Adrenal gland (tissue), 19 donors: ENCODE measurements at regions of chr16 and their contacts with region 1.

Region 1: GRCh38 chr16:21638573-21638975 is 13.8 kb downstream of the IGSF6 start:
- DNase-seq: no peak
- H3K4me3 ChIP-seq: no peak overlapping the region
- H3K27ac ChIP-seq: no peak overlapping the region
- H3K4me1 ChIP-seq: peaks cover 14 to 47% of the 10 kb centered on the region in 2 donors
- H3K27me3 ChIP-seq: no peaks in the 10 kb centered on the region
- CTCF ChIP-seq: no peak
- POLR2A ChIP-seq: no peak

Region 2: DNA sequence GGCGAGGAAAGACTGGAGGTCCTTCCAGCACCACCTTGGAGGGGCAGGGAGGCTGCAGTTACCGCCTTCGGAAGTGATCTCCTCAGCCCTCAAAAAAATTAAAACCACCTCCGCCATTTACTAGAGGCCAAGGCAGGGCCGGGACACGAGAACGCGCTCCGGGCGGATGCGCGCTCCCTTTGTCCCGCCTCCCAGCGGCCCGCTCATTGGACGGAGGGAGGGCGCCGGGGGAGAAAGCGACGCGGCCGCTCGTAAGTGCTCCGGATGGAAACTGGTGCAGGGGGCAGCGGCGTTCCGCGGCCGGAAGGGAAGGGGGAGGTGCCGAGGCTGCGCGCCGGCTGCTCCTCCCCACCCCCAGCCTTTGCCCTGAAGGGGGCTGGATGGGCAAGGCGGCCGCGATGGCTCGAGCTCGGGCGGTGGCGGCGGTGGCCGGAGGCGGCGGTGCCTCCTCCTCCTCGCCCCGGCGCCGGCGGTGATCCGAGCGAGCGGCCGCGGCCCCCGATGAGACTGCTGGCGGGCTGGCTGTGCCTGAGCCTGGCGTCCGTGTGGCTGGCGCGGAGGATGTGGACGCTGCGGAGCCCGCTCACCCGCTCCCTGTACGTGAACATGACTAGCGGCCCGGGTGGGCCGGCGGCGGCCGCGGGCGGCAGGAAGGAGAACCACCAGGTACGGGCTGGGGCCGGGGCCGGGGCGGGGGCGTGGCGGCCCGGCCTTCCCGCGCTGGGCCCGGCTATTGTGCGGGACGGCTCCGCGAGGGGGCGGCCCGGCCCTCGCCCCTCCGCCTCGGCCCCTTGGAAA is 39.1 kb before region 1 on chr16 and contains the start of gene METTL9:
- intact Hi-C with region 1: loop called in 1 of 2 experiments (anchors 5 kb)
- DNase-seq: peak; percentile 94 to 97 (median 95)
- H3K4me3 ChIP-seq: peak within 1 kb of the TSS; percentile 62 to 92 (median 83)
- H3K27ac ChIP-seq: peak within 1 kb of the TSS; percentile 71 to 98 (median 96)
- H3K4me1 ChIP-seq: peaks cover 35 to 46% of the 10 kb centered on the region in 2 donors
- H3K27me3 ChIP-seq: no peaks in the 10 kb centered on the region
- CTCF ChIP-seq: peak in 2 of 6 experiments; percentile 11 to 32
- POLR2A ChIP-seq: peak; percentile 82 to 94
- total RNA-seq, gene METTL9: 126 to 398 (median 232) TPM